Tibial artery (tissue), 4 donors: ENCODE measurements at regions of chr1 and their contacts with region 1.

Region 1: GRCh38 chr1:202315576-202316168 is 26.1 kb downstream of the UBE2T start:
- DNase-seq: peak; percentile 64 to 81
- H3K4me3 ChIP-seq: no peak overlapping the region
- H3K27ac ChIP-seq: no peak overlapping the region
- H3K4me1 ChIP-seq: peaks cover 0 to 8% (median 4%) of the 10 kb centered on the region in 4 donors
- H3K27me3 ChIP-seq: no peaks in the 10 kb centered on the region
- CTCF ChIP-seq: peak; percentile 90 to 93

Region 2: GRCh38 chr1:202029171-202029665 is 286.5 kb before region 1 on chr1:
- intact Hi-C with region 1: no loop called
- DNase-seq: no peak
- H3K4me3 ChIP-seq: no peak overlapping the region
- H3K27ac ChIP-seq: no peak overlapping the region
- H3K4me1 ChIP-seq: peaks cover 0 to under 1% (median under 1%) of the 10 kb centered on the region in 4 donors
- H3K27me3 ChIP-seq: no peaks in the 10 kb centered on the region
- CTCF ChIP-seq: no peak

Region 3: GRCh38 chr1:202184750-202185460 is 130.8 kb before region 1 on chr1:
- intact Hi-C with region 1: loop called (anchors 2 kb)
- DNase-seq: peak; percentile 69 to 84
- H3K4me3 ChIP-seq: no peak overlapping the region
- H3K27ac ChIP-seq: no peak overlapping the region
- H3K4me1 ChIP-seq: peaks cover 0 to 11% (median 8%) of the 10 kb centered on the region in 4 donors
- H3K27me3 ChIP-seq: peaks cover 0 to 32% of the 10 kb centered on the region in 2 donors
- CTCF ChIP-seq: peak; percentile 81 to 90